ENCODE measurements at regions of chr9 and their contacts with region 1.

Region 1: GRCh38 chr9:134768709-134769351 is 111.8 kb upstream of the FCN2 start:
- DNase-seq: no peak
- H3K4me3 ChIP-seq: no peak overlapping the region
- CTCF ChIP-seq: no peak

Region 2: GRCh38 chr9:134707031-134707680 is 61.7 kb before region 1 on chr9:
- in situ Hi-C with region 1: loop called (anchors 10 kb)
- DNase-seq: peak; percentile 76
- H3K4me3 ChIP-seq: no peak overlapping the region
- CTCF ChIP-seq: no peak

Measured in astrocyte of the cerebellum (primary cell).